Psoas muscle (tissue), 8 donors: ENCODE measurements at regions of chr1 and their contacts with region 1.

Region 1: DNA sequence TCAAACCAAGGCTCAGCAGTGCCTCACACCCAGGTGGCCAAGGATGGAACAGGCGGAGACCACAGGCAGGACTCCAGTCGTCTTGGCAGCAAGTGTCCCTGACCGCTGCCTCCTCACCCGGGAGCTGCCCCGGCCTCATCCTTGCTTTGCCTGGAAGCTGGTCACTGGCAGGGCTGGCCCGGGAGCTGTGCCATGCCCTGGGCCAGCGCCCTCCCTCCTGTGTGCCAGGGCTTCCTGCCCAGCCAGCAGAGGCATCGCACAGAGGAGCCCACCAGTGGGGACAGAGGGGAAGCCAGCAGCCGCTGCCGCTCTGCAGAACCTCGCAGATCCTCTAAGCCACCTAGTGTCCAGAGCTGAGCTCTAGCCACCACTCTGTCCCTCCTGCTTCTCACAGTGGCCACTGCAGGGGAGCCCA is 7.8 kb downstream of the CASZ1 start:
- DNase-seq: peak; percentile 77 to 94
- ATAC-seq: peak; percentile 89 to 93 (median 92)
- H3K4me3 ChIP-seq: no peak overlapping the region
- H3K27ac ChIP-seq: peak overlapping the region; percentile 99
- H3K4me1 ChIP-seq: peaks cover 59% of the 10 kb centered on the region
- H3K27me3 ChIP-seq: no peaks in the 10 kb centered on the region
- CTCF ChIP-seq: peak; percentile 52

Region 2: DNA sequence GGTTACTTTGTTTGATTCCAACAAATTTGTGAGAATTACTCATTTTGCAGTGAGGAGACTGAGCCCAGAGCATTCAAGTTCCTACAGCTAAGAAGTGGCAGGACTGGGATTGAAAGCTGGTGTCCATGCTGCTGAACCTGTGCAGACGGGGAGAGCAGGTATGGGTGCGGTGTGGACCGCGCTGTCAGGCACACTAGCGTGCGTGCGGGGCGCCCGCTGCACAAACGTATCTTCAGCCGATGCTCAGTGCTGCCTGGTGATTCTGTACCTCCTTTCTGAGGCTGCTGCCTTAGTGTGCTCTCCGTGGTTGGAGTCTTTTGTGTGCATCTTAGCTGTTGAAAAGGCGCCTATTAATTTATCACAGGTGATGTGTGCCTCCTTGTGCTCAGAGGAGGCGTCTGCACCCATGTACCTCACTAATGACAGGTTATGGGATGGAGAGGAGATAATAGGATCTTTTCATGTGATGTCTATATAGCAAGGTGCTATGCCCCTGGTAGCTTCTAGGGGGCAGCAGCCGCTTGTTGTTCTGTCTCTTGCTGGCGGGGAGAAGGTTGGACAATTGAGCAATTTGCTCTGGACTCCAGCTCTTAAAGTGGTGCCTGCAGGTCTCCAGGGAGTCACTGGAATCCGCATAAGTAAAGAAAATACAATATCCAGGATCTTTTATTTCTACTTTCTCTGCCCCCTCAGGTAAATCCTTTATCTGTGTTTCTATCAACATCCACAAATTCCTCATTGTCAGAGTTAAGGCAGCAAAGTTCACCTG is 281.3 kb before region 1 on chr1:
- intact Hi-C with region 1: loop called (anchors 5 kb)
- DNase-seq: peak; percentile 61 to 81
- ATAC-seq: peak; percentile 74 to 82 (median 78)
- H3K4me3 ChIP-seq: no peak overlapping the region
- H3K27ac ChIP-seq: no peak overlapping the region
- H3K4me1 ChIP-seq: peaks cover 46% of the 10 kb centered on the region
- H3K27me3 ChIP-seq: no peaks in the 10 kb centered on the region
- CTCF ChIP-seq: peak; percentile 87

Region 3: DNA sequence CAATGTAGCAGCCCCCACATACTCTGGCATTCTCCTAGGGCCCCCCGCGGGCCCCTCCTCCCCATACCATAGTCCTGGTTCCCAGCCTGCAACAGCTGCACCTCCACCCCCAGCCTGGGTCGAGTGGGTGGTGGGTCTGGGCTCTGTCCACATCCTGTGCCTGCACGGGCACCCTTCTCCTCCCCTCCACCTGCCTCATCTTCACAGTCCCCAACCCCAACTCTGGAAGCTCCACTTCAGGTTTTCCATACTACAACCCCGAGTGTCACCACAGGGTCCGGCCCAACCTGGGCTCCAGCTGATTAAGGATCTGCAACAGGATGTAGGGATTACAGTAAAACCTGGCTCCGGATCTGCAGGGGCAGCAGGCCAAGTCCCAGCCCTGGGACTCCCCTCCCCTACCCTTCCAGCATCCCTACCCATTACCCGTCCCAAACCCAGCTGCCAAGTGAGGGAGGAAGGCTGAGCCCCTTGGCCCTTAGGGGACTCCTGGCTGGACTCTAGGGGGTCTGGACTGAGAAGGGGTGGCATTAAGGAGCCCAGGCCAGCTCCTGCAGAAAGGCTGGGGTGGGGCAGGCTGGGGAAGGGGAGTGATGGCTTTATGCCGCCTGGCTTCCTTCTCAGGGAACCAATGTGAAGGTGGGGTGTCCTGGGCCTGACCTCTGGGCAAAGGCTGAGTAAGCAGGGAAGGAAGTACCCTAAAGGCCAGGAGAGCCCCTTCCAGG is 108.9 kb before region 1 on chr1:
- intact Hi-C with region 1: loop called in 1 of 2 experiments (anchors 5 kb)
- DNase-seq: no peak
- ATAC-seq: peak in 3 of 4 donors; percentile 16 to 28 (median 21)
- H3K4me3 ChIP-seq: no peak overlapping the region
- H3K27ac ChIP-seq: peak overlapping the region; percentile 36
- H3K4me1 ChIP-seq: peaks cover 82% of the 10 kb centered on the region
- H3K27me3 ChIP-seq: no peaks in the 10 kb centered on the region
- CTCF ChIP-seq: no peak

Region 4: DNA sequence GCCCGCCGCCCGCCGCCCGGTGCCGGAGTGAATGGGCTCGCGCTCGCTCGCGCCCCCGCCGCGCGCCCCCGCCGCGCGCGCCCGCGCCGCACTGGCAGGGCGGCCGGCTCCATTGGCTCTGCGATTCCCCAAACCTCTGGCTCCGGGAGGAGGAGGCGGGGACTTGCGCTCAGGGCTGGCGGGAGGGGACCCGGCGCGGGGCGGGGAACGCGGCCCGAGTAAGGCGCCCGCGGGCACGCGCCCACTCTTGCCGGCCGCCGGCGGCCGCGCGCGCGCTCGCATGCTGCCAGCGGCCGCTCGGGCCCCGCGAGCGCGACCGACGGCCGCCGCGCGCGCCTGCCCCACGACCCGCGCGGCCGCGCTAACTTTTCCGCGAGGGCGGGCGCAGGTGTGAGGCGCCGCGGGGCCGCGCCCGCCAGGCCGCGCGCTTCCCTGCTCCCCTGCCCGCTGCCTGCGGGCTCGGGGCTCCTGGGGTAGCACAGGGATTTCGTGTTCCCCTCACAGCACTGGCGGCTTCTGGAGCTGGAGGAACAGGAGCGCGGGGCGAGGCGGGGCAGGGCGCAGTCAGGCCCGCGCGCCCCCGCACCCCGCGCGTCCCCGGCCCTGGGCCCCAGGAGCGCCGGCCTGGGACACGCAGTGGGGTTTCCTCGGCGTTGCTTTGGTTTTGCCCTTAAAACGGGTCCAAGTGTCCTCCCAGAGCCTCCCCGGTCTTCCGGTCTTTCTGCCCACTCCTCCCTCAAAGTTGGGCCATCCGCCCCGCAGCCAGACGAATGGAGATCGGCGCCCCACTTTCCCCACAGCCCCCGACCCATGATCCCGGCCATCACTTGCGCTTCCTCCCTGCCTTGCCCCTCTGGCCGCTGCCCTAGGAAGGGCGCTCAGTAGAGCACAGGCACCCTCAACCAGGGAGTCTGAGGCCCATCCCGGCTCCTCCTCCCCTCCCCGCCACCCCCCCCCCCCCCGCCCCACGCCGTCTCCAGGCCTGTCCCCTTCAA is 93.7 kb before region 1 on chr1:
- intact Hi-C with region 1: loop called in 1 of 2 experiments (anchors 5 kb)
- DNase-seq: peak; percentile 92 to 95
- ATAC-seq: peak; percentile 75 to 82 (median 76)
- H3K4me3 ChIP-seq: peak overlapping the region; percentile 65
- H3K27ac ChIP-seq: peak overlapping the region; percentile 87
- H3K4me1 ChIP-seq: peaks cover 53% of the 10 kb centered on the region
- H3K27me3 ChIP-seq: no peaks in the 10 kb centered on the region
- CTCF ChIP-seq: no peak

Region 5: DNA sequence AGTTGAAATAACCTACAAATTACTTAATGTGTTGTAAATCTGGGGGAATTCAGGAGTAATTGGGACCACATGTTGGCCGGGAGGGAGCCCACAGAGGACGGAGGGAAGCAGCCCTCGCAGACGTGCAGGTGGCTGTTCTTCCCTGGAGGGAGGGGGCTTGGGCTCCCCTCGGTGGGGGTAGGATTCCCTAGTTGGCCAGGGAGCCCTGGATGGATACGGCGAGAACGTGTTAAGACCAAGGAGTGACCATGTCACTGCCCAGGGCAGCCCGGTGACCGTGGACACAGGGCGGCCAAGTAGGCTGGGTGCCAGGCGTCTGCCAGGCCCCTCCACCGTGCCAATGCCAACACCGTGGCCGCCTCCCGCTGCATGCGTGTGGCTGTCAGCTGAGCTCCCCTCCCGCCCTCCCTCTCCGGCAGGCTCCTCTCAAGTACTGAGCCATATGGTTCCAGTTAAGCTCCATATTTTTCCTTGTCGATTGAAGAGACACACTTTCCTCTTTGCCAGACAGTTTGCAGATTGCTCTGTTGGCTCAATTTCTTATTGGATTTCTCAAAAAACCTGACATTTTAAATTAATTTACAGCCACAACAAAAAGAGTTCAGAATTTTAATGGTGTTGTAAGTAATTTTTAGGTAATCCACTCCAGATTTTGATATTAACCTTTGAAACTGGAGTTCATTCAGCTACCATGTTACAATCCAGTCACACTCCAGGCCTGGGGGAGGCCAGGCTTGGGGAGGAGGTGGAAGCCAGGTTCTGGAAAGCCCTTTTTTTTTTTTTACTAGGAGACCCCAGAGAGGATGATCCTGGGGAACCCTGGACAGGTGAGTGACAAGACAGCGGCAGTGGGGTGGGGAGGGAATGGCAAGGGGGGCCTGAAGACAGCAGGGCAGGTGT is 63.4 kb before region 1 on chr1:
- intact Hi-C with region 1: loop called in 1 of 2 experiments (anchors 2 kb)
- DNase-seq: peak; percentile 83 to 95
- ATAC-seq: peak; percentile 78 to 81 (median 79)
- H3K4me3 ChIP-seq: no peak overlapping the region
- H3K27ac ChIP-seq: peak overlapping the region; percentile 91
- H3K4me1 ChIP-seq: peaks cover 69% of the 10 kb centered on the region
- H3K27me3 ChIP-seq: no peaks in the 10 kb centered on the region
- CTCF ChIP-seq: no peak

Region 6: GRCh38 chr1:10745886-10746455 is 42.6 kb before region 1 on chr1:
- intact Hi-C with region 1: loop called (anchors 5 kb)
- DNase-seq: peak; percentile 77 to 93
- ATAC-seq: peak; percentile 91 to 96 (median 93)
- H3K4me3 ChIP-seq: peak overlapping the region; percentile 38
- H3K27ac ChIP-seq: peak overlapping the region; percentile 87
- H3K4me1 ChIP-seq: peaks cover 45% of the 10 kb centered on the region
- H3K27me3 ChIP-seq: no peaks in the 10 kb centered on the region
- CTCF ChIP-seq: no peak

Region 7: DNA sequence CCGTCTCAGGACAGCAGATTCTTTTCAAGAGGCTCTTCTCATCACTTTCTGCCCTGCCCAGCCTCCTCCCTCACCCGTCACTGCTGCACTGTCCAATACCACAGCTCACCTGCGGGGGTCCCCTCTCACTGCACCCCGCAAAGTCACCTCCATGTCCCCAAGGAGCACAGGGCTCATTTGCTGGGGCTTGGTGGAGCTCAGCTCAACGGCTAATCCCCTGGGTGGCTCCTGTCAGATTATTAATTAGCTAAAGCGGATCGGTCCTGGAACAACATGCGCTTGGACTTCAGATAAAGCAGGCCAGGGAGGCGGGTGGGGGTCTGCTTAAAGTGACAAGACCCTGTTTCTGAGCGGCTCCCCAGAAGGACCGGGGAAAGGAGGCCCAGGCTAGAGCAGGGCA is 35.3 kb before region 1 on chr1:
- intact Hi-C with region 1: loop called (anchors 5 kb)
- DNase-seq: no peak
- ATAC-seq: no peak
- H3K4me3 ChIP-seq: no peak overlapping the region
- H3K27ac ChIP-seq: no peak overlapping the region
- H3K4me1 ChIP-seq: peaks cover 53% of the 10 kb centered on the region
- H3K27me3 ChIP-seq: no peaks in the 10 kb centered on the region
- CTCF ChIP-seq: no peak

Region 8: DNA sequence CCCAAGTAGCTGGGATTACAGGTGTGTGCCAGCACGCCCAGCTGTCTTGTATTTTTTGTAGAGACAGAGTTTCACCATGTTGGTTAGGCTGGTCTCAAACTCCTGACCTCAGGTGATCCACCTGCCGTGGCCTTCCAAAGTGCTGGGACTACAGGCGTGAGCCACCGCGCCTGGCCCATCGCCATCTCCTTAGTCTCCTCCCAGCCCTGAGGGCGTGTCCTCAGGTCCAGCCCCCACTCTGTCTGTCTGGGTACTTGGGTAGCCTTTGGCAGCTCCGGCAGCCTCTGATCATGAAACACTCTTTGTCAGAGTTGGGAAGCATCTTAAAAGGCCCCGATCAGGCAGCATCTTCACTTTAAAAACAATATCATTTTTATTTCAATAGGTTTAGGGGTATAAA is 600.0 kb after region 1 on chr1:
- intact Hi-C with region 1: no loop called
- DNase-seq: no peak
- ATAC-seq: no peak
- H3K4me3 ChIP-seq: no peak overlapping the region
- H3K27ac ChIP-seq: no peak overlapping the region
- H3K4me1 ChIP-seq: no peaks in the 10 kb centered on the region
- H3K27me3 ChIP-seq: peaks cover 0 to 56% (median 12%) of the 10 kb centered on the region in 3 donors
- CTCF ChIP-seq: no peak